CD4-positive, alpha-beta T cell (primary cell): ENCODE measurements at regions of chr11 and their contacts with region 1.

Region 1: DNA sequence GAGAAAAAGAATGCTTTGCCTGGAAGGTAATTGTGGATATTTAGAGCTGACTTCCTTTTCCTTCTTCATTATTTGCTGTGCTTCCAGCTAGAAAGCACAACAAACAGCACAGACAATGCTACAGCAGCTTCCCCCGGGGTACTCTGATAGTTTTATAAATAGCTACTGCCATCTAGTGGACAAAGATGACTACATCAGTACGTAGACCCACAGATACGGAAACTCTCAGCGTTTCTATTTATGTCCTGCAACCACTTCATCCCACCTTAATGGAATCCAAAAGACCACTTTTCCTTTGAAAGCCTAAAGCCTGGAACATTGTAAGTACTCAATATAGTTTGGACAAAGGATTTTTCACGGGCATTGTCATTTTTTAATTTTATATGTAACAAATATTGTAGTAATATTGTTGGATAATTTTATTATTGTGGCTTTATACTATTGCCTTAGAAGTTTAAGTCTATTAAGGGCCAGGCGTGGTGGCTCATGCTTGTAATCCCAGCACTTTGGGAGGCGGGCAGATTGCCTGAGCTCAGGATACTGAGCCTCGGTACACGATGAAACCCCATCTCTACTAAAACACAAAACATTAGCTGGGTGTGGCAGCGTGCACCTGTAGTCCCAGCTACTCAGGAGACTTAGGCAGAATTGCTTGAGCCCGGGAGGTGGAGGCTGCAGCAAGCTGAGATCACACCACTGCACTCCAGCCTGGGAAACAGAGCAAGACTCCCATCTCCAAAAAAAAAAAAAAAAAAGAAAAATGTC is 7.5 kb downstream of the HSPA8 start:
- DNase-seq: peak in 4 of 14 experiments; percentile 39 to 83 (median 80)
- ATAC-seq: peak; percentile 87
- H3K4me3 ChIP-seq: no peak overlapping the region
- H3K4me3 Mint-ChIP-seq: peak overlapping the region; percentile 73
- H3K27ac ChIP-seq: peak overlapping the region in 1 of 2 donors; percentile 11
- H3K27ac Mint-ChIP-seq: peak overlapping the region; percentile 98
- H3K4me1 ChIP-seq: peaks cover 52% of the 10 kb centered on the region
- H3K4me1 Mint-ChIP-seq: peaks cover 55% of the 10 kb centered on the region
- H3K27me3 ChIP-seq: no peaks in the 10 kb centered on the region
- H3K27me3 Mint-ChIP-seq: no peaks in the 10 kb centered on the region
- CTCF ChIP-seq: peak; percentile 69

Region 2: GRCh38 chr11:121132196-121132976 is 1922.1 kb before region 1 on chr11:
- CTCF ChIA-PET with region 1: no interaction called
- POLR2A ChIA-PET with region 1: no interaction called
- intact Hi-C with region 1: no loop called
- DNase-seq: no peak
- ATAC-seq: no peak
- H3K4me3 ChIP-seq: no peak overlapping the region
- H3K4me3 Mint-ChIP-seq: no peak overlapping the region
- H3K27ac ChIP-seq: no peak overlapping the region
- H3K27ac Mint-ChIP-seq: no peak overlapping the region
- H3K4me1 ChIP-seq: no peaks in the 10 kb centered on the region
- H3K4me1 Mint-ChIP-seq: no peaks in the 10 kb centered on the region
- H3K27me3 ChIP-seq: no peaks in the 10 kb centered on the region
- H3K27me3 Mint-ChIP-seq: no peaks in the 10 kb centered on the region
- CTCF ChIP-seq: no peak

Region 3: GRCh38 chr11:122796128-122796717 is 258.3 kb before region 1 on chr11:
- CTCF ChIA-PET with region 1: interaction called, 4 read pairs
- POLR2A ChIA-PET with region 1: no interaction called
- intact Hi-C with region 1: loop called (anchors 5 to 10 kb)
- DNase-seq: peak; percentile 52 to 78 (median 60)
- ATAC-seq: peak; percentile 94
- H3K4me3 ChIP-seq: no peak overlapping the region
- H3K4me3 Mint-ChIP-seq: no peak overlapping the region
- H3K27ac ChIP-seq: no peak overlapping the region
- H3K27ac Mint-ChIP-seq: no peak overlapping the region
- H3K4me1 ChIP-seq: no peaks in the 10 kb centered on the region
- H3K4me1 Mint-ChIP-seq: no peaks in the 10 kb centered on the region
- H3K27me3 ChIP-seq: no peaks in the 10 kb centered on the region
- H3K27me3 Mint-ChIP-seq: no peaks in the 10 kb centered on the region
- CTCF ChIP-seq: peak; percentile 95

Region 4: DNA sequence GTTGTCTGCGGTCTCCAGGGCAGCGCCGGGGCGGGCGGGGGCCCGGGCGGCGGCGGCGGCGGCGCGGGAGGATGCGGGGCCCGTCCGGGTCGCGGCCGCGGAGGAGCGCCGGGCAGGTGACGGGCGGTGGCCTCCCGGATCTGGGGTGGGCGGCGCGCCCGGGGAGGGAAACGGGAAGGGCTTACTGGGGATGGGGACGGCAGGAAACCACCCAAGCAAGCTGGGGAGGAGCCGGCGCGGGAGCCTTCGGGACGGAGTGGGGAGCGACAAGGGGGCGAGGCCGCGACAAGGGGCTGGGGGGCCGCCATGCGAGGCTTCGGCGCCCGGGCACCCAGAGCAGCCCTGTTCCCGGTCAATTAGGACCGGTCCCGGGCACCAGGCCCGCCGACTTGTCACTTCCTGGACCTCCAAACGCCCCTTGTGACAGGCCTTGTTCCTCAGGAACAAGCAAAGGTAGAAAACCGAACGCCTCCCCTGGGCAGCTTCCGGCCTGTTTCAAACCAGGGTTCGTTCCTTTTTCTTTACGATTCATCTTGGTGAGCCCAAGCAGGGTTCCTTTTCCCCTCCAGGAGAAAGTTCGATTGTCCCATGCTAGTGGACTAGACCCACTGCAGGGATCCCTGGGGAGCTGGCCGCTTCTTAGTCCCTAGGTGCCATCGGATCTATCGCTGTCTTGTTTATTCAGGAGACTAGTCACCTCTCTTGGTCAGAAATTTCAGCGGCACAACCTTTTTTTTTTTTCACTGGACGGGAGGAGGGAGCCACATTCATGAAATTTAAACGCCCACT is 171.4 kb before region 1 on chr11:
- CTCF ChIA-PET with region 1: no interaction called
- POLR2A ChIA-PET with region 1: interaction called, 5 read pairs
- intact Hi-C with region 1: loop called in 1 of 2 experiments (anchors 5 kb)
- DNase-seq: peak; percentile 5 to 76 (median 48)
- ATAC-seq: peak; percentile 81
- H3K4me3 ChIP-seq: peak overlapping the region; percentile 78
- H3K4me3 Mint-ChIP-seq: peak overlapping the region; percentile 89
- H3K27ac ChIP-seq: peak overlapping the region; percentile 42 to 83
- H3K27ac Mint-ChIP-seq: peak overlapping the region; percentile 75
- H3K4me1 ChIP-seq: peaks cover 17% of the 10 kb centered on the region
- H3K4me1 Mint-ChIP-seq: peaks cover 38% of the 10 kb centered on the region
- H3K27me3 ChIP-seq: no peaks in the 10 kb centered on the region
- H3K27me3 Mint-ChIP-seq: no peaks in the 10 kb centered on the region
- CTCF ChIP-seq: no peak

Region 5: DNA sequence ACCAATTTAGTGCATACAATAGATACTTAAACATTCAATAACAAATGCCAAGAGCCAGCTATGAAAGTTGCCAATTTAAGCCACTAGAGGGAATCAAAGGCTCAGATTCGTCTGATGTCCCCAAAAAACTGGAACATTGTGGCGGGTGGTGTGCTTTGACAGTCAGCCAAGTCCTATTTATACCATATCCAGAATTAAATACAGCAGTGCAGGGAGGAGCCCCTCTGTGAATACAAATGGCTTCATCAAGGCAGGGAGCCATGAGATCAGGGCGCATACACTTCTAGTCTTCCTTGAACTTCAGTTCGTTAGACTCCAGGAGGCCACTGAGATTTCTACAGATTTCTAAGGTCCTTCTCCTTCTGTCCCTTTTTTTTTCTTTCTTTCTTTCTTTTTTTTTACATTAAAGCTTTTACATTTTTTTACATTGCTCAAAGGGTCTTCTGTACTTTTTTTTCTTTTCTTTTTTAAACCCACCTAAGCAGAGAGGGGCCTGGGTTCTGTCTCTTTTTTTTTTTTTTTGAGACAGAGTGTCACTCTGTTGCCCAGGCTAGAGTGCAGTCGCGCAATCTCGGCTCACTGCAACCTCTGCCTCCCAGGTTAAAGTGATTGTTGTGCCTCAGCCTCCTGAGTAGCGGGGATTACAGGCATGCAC is 49.0 kb after region 1 on chr11:
- CTCF ChIA-PET with region 1: interaction called, 28 read pairs
- POLR2A ChIA-PET with region 1: interaction called, 226 read pairs
- intact Hi-C with region 1: loop called in 1 of 2 experiments (anchors 5 kb)
- DNase-seq: peak in 10 of 14 experiments; percentile 12 to 73 (median 24)
- ATAC-seq: peak; percentile 75
- H3K4me3 ChIP-seq: no peak overlapping the region
- H3K4me3 Mint-ChIP-seq: no peak overlapping the region
- H3K27ac ChIP-seq: no peak overlapping the region
- H3K27ac Mint-ChIP-seq: peak overlapping the region; percentile 52
- H3K4me1 ChIP-seq: peaks cover 26% of the 10 kb centered on the region
- H3K4me1 Mint-ChIP-seq: peaks cover 30% of the 10 kb centered on the region
- H3K27me3 ChIP-seq: no peaks in the 10 kb centered on the region
- H3K27me3 Mint-ChIP-seq: no peaks in the 10 kb centered on the region
- CTCF ChIP-seq: peak; percentile 69

Region 6: DNA sequence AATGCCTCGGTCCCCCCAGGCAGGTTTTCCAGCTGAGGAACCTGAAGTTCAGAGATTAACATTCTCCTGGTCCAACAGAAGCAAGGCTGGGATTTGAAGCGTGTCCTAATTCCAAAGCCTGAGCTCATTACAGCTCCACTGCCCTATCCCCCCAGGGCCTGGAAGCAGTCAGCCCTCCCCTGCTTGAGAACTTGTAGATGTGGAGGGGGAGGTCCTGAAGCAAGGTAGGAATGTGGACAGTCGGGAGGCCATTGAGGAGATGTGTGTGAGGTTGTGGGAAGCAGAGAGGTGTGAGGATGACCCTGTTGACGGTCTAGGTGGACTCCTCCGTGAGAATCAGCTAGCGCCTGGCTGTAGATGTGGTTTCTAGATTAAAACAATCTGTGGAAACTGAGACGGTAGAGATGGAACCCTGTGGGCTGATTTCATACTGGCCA is 383.7 kb after region 1 on chr11:
- CTCF ChIA-PET with region 1: no interaction called
- POLR2A ChIA-PET with region 1: no interaction called
- intact Hi-C with region 1: no loop called
- DNase-seq: no peak
- ATAC-seq: no peak
- H3K4me3 ChIP-seq: no peak overlapping the region
- H3K4me3 Mint-ChIP-seq: no peak overlapping the region
- H3K27ac ChIP-seq: no peak overlapping the region
- H3K27ac Mint-ChIP-seq: no peak overlapping the region
- H3K4me1 ChIP-seq: peaks cover 24% of the 10 kb centered on the region
- H3K4me1 Mint-ChIP-seq: peaks cover 16% of the 10 kb centered on the region
- H3K27me3 ChIP-seq: no peaks in the 10 kb centered on the region
- H3K27me3 Mint-ChIP-seq: no peaks in the 10 kb centered on the region
- CTCF ChIP-seq: no peak

Region 7: GRCh38 chr11:123536690-123537437 is 482.4 kb after region 1 on chr11:
- CTCF ChIA-PET with region 1: no interaction called
- POLR2A ChIA-PET with region 1: no interaction called
- intact Hi-C with region 1: no loop called
- DNase-seq: no peak
- ATAC-seq: no peak
- H3K4me3 ChIP-seq: no peak overlapping the region
- H3K4me3 Mint-ChIP-seq: no peak overlapping the region
- H3K27ac ChIP-seq: no peak overlapping the region
- H3K27ac Mint-ChIP-seq: no peak overlapping the region
- H3K4me1 ChIP-seq: no peaks in the 10 kb centered on the region
- H3K4me1 Mint-ChIP-seq: no peaks in the 10 kb centered on the region
- H3K27me3 ChIP-seq: no peaks in the 10 kb centered on the region
- H3K27me3 Mint-ChIP-seq: no peaks in the 10 kb centered on the region
- CTCF ChIP-seq: no peak

Region 8: GRCh38 chr11:123741159-123742028 is 686.9 kb after region 1 on chr11 and contains the start of gene ZNF202:
- CTCF ChIA-PET with region 1: no interaction called
- POLR2A ChIA-PET with region 1: no interaction called
- intact Hi-C with region 1: loop called in 1 of 2 experiments (anchors 10 kb)
- DNase-seq: peak; percentile 81 to 95 (median 89)
- ATAC-seq: peak; percentile 93
- H3K4me3 ChIP-seq: peak within 1 kb of the TSS; percentile 98
- H3K4me3 Mint-ChIP-seq: peak within 1 kb of the TSS; percentile 97
- H3K27ac ChIP-seq: peak within 1 kb of the TSS; percentile 33 to 61
- H3K27ac Mint-ChIP-seq: peak within 1 kb of the TSS; percentile 86
- H3K4me1 ChIP-seq: peaks cover 19% of the 10 kb centered on the region
- H3K4me1 Mint-ChIP-seq: peaks cover 45% of the 10 kb centered on the region
- H3K27me3 ChIP-seq: no peaks in the 10 kb centered on the region
- H3K27me3 Mint-ChIP-seq: peaks cover 11% of the 10 kb centered on the region
- CTCF ChIP-seq: no peak
- total RNA-seq, gene ZNF202: 6.8 to 8.0 TPM